K562 (cell line): ENCODE measurements at regions of chr1 and their contacts with region 1.

Region 1: GRCh38 chr1:63537940-63538339 is 14.6 kb downstream of the EFCAB7 start:
- DNase-seq: no peak
- ATAC-seq: no peak
- H3K4me3 ChIP-seq: no peak overlapping the region
- H3K27ac ChIP-seq: no peak overlapping the region
- H3K4me1 ChIP-seq: no peaks in the 10 kb centered on the region
- H3K27me3 ChIP-seq: no peaks in the 10 kb centered on the region
- CTCF ChIP-seq: peak in 2 of 3 experiments; percentile 12 to 66; a peak in 3 of 6 replicates
- EP300 ChIP-seq: no peak
- POLR2A ChIP-seq: no peak
- RAD21 ChIP-seq: peak; percentile 32 to 54

Region 2: DNA sequence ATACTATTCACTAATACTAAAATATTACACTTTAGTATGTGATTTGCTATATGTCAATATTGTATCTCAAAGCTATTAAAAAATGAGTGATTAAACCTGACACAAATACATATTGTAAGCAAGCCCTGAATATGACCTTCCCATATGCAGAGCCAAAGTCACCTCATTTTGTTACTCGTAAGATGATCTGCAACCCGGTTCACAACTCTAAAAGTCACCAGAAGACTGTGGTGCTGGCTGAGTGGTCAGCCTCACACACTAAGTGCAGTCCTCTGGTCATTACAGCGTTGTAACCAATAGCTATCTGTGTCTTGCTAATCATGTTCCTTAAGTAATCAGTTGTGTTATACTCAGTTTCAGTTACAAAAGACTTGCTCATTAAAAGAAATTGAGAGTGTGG is 1540.8 kb before region 1 on chr1:
- CTCF ChIA-PET with region 1: no interaction called
- POLR2A ChIA-PET with region 1: no interaction called
- in situ Hi-C with region 1: no loop called
- intact Hi-C with region 1: no loop called
- DNase-seq: no peak
- ATAC-seq: no peak
- H3K4me3 ChIP-seq: no peak overlapping the region
- H3K27ac ChIP-seq: no peak overlapping the region
- H3K4me1 ChIP-seq: no peaks in the 10 kb centered on the region
- H3K27me3 ChIP-seq: 0 out of 5 replicates have a peak, but pooled peaks cover 0 to 2% of the 10 kb centered on the region in 2 experiments
- CTCF ChIP-seq: no peak
- EP300 ChIP-seq: no peak
- POLR2A ChIP-seq: no peak
- RAD21 ChIP-seq: no peak

Region 3: GRCh38 chr1:63316984-63317816 is 220.7 kb before region 1 on chr1:
- CTCF ChIA-PET with region 1: interaction called, 3 read pairs
- POLR2A ChIA-PET with region 1: no interaction called
- in situ Hi-C with region 1: no loop called
- intact Hi-C with region 1: loop called (anchors 5 kb)
- DNase-seq: peak; percentile 80 to 91 (median 85)
- ATAC-seq: peak; percentile 99
- H3K4me3 ChIP-seq: peak overlapping the region; percentile 44
- H3K27ac ChIP-seq: no peak overlapping the region
- H3K4me1 ChIP-seq: peaks cover 4 to 20% of the 10 kb centered on the region in 2 experiments; a peak in 4 of 5 replicates
- H3K27me3 ChIP-seq: peaks cover 0 to 4% of the 10 kb centered on the region in 2 experiments; a peak in 1 of 5 replicates
- CTCF ChIP-seq: peak; percentile 72 to 87 (median 79)
- EP300 ChIP-seq: no peak; the same call in 1 of the 2 replicates
- POLR2A ChIP-seq: no peak
- RAD21 ChIP-seq: peak; percentile 62 to 73